Posterior cingulate gyrus (tissue), 11 donors: ENCODE measurements at regions of chr15 and their contacts with region 1.

Region 1: GRCh38 chr15:101641166-101641764 is 10.9 kb downstream of the TM2D3 start:
- DNase-seq: peak in 9 of 10 donors; percentile 60 to 94 (median 84)

Region 2: DNA sequence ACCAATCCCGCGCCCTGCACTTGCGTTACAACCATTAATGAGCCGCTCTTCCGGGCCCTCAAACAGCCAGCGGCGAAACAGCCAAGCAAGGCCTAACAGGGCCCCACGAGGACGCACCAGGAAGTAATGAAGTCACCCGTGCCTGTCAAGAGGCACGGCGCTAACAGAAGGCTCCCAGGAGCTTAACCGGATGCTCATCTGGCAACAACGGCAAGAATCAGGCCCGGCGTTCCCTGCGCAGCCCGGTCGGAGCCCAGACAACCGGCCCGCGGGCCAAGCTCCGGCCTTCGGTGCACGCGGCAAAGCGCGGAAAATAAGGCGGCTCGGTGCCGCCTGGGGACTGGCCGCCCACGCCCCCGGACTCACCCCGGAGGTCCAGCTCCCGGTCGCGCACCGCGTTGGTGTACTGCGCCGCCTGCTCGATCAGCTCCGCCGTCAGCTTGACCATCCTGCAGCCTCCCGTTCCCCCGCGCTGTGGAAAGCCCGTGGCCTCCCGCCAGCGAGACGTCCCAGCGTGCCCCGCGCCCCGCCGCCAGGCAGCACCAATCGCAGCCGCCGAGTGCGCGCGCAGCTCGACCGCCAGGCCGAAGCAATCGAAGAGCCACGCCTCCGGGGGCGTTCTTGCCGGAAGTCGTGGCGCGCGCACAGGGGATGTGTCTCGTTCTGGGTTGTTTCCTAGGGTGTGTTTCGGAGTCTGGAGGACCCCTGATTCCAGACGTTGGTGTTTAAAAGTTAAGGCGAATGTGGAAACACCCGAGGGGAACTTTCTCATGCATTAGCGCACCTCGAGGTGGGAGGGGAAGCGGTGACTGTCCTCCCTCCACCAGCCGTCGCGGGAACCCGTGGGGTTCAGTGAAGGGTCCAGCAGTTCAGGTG is 346.3 kb before region 1 on chr15 and contains the start of gene SNRPA1:
- intact Hi-C with region 1: loop called (anchors 1 kb)
- DNase-seq: peak; percentile 92 to 99 (median 94)

Region 3: DNA sequence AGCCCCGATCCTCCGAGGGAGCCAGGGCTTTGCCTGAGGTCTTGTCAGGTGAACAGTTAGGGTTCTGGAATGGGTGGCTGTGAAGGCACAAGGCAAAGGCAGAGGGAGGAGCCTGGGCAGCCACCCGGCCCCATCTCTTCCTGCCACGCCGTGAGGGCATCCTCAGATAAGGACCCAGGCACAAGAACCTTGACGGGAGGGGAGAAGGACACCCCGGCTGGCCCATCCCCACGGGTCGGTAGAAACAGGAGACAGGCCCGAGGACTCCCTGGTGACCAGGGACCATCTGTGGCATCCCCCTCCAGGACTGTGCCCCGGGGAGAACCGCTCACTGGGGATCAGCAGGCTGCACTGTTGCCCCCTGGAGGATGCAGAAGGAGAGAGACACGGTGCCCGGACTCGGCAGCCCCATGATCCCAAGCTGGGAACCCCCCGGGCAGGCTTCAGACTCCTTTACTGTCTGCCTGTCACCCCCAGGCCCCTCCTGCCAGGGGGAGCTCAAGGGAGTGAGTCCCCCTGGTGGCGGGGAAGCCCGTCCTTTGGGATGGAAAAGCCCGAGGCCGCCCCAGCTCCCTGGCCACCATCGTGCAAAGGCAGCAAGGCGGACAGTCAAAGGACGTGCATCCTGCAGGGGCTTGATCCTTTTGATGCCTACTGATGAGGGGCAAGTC is 139.4 kb before region 1 on chr15:
- intact Hi-C with region 1: loop called (anchors 10 kb)
- DNase-seq: peak in 6 of 10 donors; percentile 51 to 93 (median 68)